Posterior vena cava (tissue), 2 donors: ENCODE measurements at regions of chr7 and their contacts with region 1.

Region 1: GRCh38 chr7:13551503-13551902 is 438.0 kb downstream of the ETV1 start:
- DNase-seq: no peak

Region 2: GRCh38 chr7:13111230-13111629 is 440.3 kb before region 1 on chr7:
- intact Hi-C with region 1: loop called in 1 of 2 experiments (anchors 5 kb)
- DNase-seq: no peak

Region 3: GRCh38 chr7:13518738-13519137 is 32.8 kb before region 1 on chr7:
- intact Hi-C with region 1: no loop called
- DNase-seq: no peak